ENCODE measurements at regions of chr1 and their contacts with region 1.

Region 1: DNA sequence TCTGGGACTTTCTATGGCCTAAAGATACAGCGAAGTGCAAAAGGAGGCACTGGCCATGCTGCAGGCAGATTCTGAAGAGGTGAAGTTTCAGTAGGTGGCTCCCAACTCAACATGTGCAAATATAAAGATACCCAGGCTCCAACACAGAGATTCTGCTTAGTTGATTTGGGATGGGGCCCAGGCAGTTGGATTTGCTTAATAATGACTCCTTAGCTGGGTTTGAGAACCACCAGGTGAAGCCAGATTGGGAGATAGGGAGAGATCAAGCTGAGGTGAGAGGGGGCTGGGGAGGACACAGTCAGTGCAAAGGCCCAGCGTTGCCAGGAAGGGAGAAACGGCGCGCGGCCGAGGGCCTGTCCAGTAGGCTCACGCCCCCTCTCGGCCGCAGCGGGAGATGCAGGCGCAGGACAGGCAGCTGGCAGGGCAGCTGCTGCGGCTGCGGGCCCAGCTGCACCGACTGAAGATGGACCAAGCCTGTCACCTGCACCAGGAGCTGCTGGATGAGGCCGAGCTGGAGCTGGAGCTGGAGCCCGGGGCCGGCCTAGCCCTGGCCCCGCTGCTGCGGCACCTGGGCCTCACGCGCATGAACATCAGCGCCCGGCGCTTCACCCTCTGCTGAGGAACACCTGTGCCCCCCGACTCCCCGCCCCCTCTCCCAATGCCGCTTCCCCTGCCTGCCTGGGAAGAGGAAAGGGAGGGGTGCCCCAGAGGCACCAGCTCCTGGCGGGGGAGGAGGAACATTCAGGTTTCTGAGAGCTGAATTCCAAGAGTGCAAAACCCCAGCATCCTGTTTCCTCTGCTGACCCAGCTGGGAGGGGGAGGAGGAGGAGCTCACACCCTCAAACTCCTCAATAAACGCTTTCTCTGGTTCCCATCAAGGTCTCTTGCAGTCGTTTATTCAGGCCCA is 1.2 kb downstream of the FAM167B start:
- DNase-seq: peak; percentile 63 to 75 (median 68)
- H3K4me3 ChIP-seq: peak overlapping the region; percentile 42
- H3K4me3 Mint-ChIP-seq: peak overlapping the region; percentile 82 to 100 (median 94)
- H3K27ac ChIP-seq: peak overlapping the region; percentile 89
- H3K27ac Mint-ChIP-seq: peak overlapping the region; percentile 91 to 99 (median 99)
- H3K4me1 ChIP-seq: peaks cover 52% of the 10 kb centered on the region
- H3K4me1 Mint-ChIP-seq: peaks cover 26 to 64% (median 37%) of the 10 kb centered on the region in 4 donors
- H3K27me3 ChIP-seq: no peaks in the 10 kb centered on the region
- H3K27me3 Mint-ChIP-seq: no peaks in the 10 kb centered on the region

Region 2: GRCh38 chr1:31715087-31715872 is 533.0 kb before region 1 on chr1:
- CTCF ChIA-PET with region 1: no interaction called
- POLR2A ChIA-PET with region 1: no interaction called
- intact Hi-C with region 1: no loop called
- DNase-seq: peak in 1 of 5 donors; percentile 15
- H3K4me3 ChIP-seq: no peak overlapping the region
- H3K4me3 Mint-ChIP-seq: peak overlapping the region; percentile 44 to 83 (median 70)
- H3K27ac ChIP-seq: no peak overlapping the region
- H3K27ac Mint-ChIP-seq: no peak overlapping the region
- H3K4me1 ChIP-seq: peaks cover 18% of the 10 kb centered on the region
- H3K4me1 Mint-ChIP-seq: peaks cover 7 to 23% (median 15%) of the 10 kb centered on the region in 4 donors
- H3K27me3 ChIP-seq: no peaks in the 10 kb centered on the region
- H3K27me3 Mint-ChIP-seq: peaks cover 33 to 51% of the 10 kb centered on the region in 2 donors

Region 3: GRCh38 chr1:32020339-32020738 is 227.9 kb before region 1 on chr1:
- CTCF ChIA-PET with region 1: no interaction called
- POLR2A ChIA-PET with region 1: no interaction called
- intact Hi-C with region 1: no loop called
- DNase-seq: no peak
- H3K4me3 ChIP-seq: no peak overlapping the region
- H3K4me3 Mint-ChIP-seq: peak overlapping the region in 7 of 8 donors; percentile 1 to 72 (median 60)
- H3K27ac ChIP-seq: no peak overlapping the region
- H3K27ac Mint-ChIP-seq: peak overlapping the region; percentile 14 to 84 (median 53)
- H3K4me1 ChIP-seq: peaks cover 87% of the 10 kb centered on the region
- H3K4me1 Mint-ChIP-seq: peaks cover 33 to 78% (median 47%) of the 10 kb centered on the region in 4 donors
- H3K27me3 ChIP-seq: no peaks in the 10 kb centered on the region
- H3K27me3 Mint-ChIP-seq: no peaks in the 10 kb centered on the region

Region 4: GRCh38 chr1:32179443-32180185 is 68.6 kb before region 1 on chr1 and contains the start of gene TXLNA:
- CTCF ChIA-PET with region 1: interaction called, 6 read pairs
- POLR2A ChIA-PET with region 1: interaction called, 20 read pairs
- intact Hi-C with region 1: no loop called
- DNase-seq: peak; percentile 87 to 91 (median 88)
- H3K4me3 ChIP-seq: peak within 1 kb of the TSS; percentile 19 to 72
- H3K4me3 Mint-ChIP-seq: peak within 1 kb of the TSS; percentile 89 to 93 (median 92)
- H3K27ac ChIP-seq: peak within 1 kb of the TSS; percentile 83
- H3K27ac Mint-ChIP-seq: peak within 1 kb of the TSS; percentile 90 to 98 (median 96)
- H3K4me1 ChIP-seq: peaks cover 31% of the 10 kb centered on the region
- H3K4me1 Mint-ChIP-seq: peaks cover 24 to 53% (median 39%) of the 10 kb centered on the region in 4 donors
- H3K27me3 ChIP-seq: no peaks in the 10 kb centered on the region
- H3K27me3 Mint-ChIP-seq: no peaks in the 10 kb centered on the region
- total RNA-seq, gene TXLNA: 42.6 to 43.4 TPM

Region 5: DNA sequence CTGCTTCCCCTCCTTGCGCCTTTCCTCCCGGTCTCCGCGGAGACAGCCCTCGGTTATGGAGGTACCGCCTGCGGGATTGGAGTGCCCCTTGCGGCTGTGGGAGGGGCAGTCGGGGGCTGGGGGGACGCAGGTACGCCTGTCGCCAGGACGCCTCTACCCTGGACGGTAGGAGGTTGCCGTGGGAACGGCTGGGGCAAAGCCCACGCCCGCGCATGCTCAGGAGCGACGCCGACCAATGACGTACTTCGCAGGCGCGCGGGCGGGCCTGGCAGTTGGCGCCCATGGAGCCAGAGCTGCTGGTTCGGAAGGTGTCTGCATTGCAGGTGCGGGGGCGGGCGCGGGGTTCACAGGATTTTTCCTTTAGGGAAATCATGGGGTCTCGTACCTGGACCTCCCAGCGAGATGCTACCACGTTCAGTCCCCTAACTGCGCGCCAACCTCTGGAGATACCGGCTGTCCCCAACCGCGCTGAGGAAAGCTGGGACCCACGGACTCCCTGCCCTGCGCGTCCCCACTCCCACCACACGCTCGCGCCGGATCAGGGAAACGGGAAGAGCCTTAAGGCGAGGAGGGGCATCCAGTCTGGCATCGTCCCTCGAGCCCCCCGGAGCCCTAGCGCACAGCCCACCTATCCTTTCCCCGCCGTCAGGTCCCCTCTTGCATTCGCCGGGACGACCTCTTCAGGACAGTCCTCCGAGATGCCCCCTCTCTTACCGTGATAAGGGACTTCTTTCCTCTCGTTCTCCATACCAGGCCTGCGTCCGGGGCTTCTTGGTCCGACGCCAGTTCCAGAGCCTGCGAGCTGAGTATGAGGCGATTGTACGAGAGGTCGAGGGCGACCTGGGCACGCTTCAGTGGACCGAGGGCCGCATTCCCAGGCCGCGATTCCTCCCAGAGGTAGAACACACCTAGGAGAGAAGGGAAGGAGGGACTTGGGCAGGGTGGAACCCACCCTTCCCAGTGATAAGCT is 42.5 kb before region 1 on chr1 and contains the start of gene IQCC:
- CTCF ChIA-PET with region 1: interaction called, 15 read pairs
- POLR2A ChIA-PET with region 1: interaction called, 20 read pairs
- intact Hi-C with region 1: no loop called
- DNase-seq: peak; percentile 84 to 86 (median 86)
- H3K4me3 ChIP-seq: peak within 1 kb of the TSS; percentile 71 to 73
- H3K4me3 Mint-ChIP-seq: peak within 1 kb of the TSS; percentile 86 to 91 (median 89)
- H3K27ac ChIP-seq: peak within 1 kb of the TSS; percentile 63
- H3K27ac Mint-ChIP-seq: peak within 1 kb of the TSS; percentile 83 to 95 (median 92)
- H3K4me1 ChIP-seq: peaks cover 39% of the 10 kb centered on the region
- H3K4me1 Mint-ChIP-seq: peaks cover 15 to 48% (median 33%) of the 10 kb centered on the region in 4 donors
- H3K27me3 ChIP-seq: no peaks in the 10 kb centered on the region
- H3K27me3 Mint-ChIP-seq: no peaks in the 10 kb centered on the region
- total RNA-seq, gene IQCC: 2.7 TPM

Region 6: DNA sequence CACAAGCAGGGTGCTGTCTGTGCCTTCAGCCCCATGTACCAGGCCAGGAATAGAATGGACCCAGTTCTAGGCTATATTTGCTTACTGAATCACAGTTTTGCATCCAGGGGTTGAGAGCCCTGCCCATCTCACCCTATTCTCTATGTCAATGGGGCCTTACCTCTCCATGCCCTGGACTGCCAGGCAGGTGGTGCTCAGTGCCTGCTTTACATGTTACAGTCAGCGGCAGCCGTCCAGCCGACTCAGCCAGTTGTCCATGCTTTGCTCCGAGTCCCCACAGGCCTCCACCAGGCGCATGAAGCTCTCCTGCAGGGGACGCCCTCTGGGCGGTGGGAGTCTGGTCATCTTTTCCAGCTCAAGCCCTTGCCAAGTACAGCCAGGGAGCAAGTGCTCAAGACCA is 13.4 kb before region 1 on chr1:
- CTCF ChIA-PET with region 1: interaction called, 151 read pairs
- POLR2A ChIA-PET with region 1: interaction called, 819 read pairs
- intact Hi-C with region 1: no loop called
- DNase-seq: no peak
- H3K4me3 ChIP-seq: no peak overlapping the region
- H3K4me3 Mint-ChIP-seq: no peak overlapping the region
- H3K27ac ChIP-seq: no peak overlapping the region
- H3K27ac Mint-ChIP-seq: no peak overlapping the region
- H3K4me1 ChIP-seq: peaks cover 1% of the 10 kb centered on the region
- H3K4me1 Mint-ChIP-seq: peaks cover 0 to 6% (median 3%) of the 10 kb centered on the region in 4 donors
- H3K27me3 ChIP-seq: no peaks in the 10 kb centered on the region
- H3K27me3 Mint-ChIP-seq: no peaks in the 10 kb centered on the region

Region 7: GRCh38 chr1:32273388-32274208 is 25.4 kb after region 1 on chr1:
- CTCF ChIA-PET with region 1: interaction called, 55 read pairs
- POLR2A ChIA-PET with region 1: interaction called, 819 read pairs
- intact Hi-C with region 1: loop called (anchors 1 kb)
- DNase-seq: peak; percentile 80 to 98 (median 82)
- H3K4me3 ChIP-seq: peak overlapping the region; percentile 5 to 36
- H3K4me3 Mint-ChIP-seq: peak overlapping the region; percentile 80 to 89 (median 82)
- H3K27ac ChIP-seq: peak overlapping the region; percentile 62
- H3K27ac Mint-ChIP-seq: peak overlapping the region; percentile 95 to 100 (median 97)
- H3K4me1 ChIP-seq: peaks cover 61% of the 10 kb centered on the region
- H3K4me1 Mint-ChIP-seq: peaks cover 44 to 63% (median 51%) of the 10 kb centered on the region in 4 donors
- H3K27me3 ChIP-seq: no peaks in the 10 kb centered on the region
- H3K27me3 Mint-ChIP-seq: no peaks in the 10 kb centered on the region

Region 8: DNA sequence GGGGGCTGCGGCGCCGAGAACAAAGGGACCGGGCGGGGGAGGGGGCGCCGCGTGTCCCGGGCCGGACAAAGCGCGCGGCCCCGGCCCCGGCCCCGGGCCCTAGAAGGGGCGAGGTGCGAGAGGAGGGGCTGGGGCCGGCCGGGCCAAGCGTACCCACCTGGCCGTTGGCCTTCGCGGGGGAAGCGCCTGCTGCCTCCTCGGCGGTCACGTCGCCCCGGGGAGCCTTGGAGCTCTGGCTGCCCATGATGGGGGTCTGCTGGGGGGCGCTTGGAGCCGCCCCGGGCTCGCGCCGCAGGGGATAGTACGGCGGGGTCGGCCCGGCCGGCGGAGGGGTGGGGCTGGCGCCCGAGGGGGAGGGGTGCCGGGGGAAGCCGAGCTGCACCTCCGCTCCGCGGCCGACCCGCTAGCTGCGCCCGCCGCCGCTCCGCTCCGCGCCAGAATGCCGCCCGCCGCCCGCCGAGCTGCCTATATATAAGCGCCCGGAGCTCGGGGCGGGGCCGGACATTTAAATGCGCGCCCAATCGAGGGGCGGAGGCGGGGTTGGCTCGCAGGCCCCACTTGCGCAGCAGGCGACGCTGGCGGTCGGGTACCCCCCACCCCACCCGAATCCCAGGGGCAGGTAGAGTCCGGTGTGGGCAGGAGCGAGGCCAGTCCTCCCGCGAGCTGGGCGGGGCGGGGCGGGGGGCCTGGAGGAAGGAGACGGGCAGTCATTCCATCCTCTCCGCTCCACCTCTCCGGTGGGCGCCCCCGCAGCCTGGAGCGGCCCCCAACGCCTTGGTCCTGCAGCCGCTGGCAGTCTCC is 87.8 kb after region 1 on chr1 and contains the start of gene MARCKSL1:
- CTCF ChIA-PET with region 1: interaction called, 7 read pairs
- POLR2A ChIA-PET with region 1: interaction called, 133 read pairs
- intact Hi-C with region 1: loop called (anchors 1 kb)
- DNase-seq: peak; percentile 82 to 85 (median 85)
- H3K4me3 ChIP-seq: peak within 1 kb of the TSS; percentile 29 to 48
- H3K4me3 Mint-ChIP-seq: peak within 1 kb of the TSS; percentile 83 to 92 (median 87)
- H3K27ac ChIP-seq: peak within 1 kb of the TSS; percentile 45
- H3K27ac Mint-ChIP-seq: peak within 1 kb of the TSS; percentile 31 to 95 (median 85)
- H3K4me1 ChIP-seq: peaks cover 40% of the 10 kb centered on the region
- H3K4me1 Mint-ChIP-seq: peaks cover 26 to 44% (median 34%) of the 10 kb centered on the region in 4 donors
- H3K27me3 ChIP-seq: no peaks in the 10 kb centered on the region
- H3K27me3 Mint-ChIP-seq: no peaks in the 10 kb centered on the region
- total RNA-seq, gene MARCKSL1: 46.5 to 47.3 TPM

Region 9: GRCh38 chr1:32394141-32394889 is 146.1 kb after region 1 on chr1 and contains the start of gene BSDC1:
- CTCF ChIA-PET with region 1: interaction called, 5 read pairs
- POLR2A ChIA-PET with region 1: interaction called, 29 read pairs
- intact Hi-C with region 1: no loop called
- DNase-seq: peak; percentile 98 to 99 (median 99)
- H3K4me3 ChIP-seq: peak within 1 kb of the TSS; percentile 87
- H3K4me3 Mint-ChIP-seq: peak within 1 kb of the TSS; percentile 99 to 100 (median 100)
- H3K27ac ChIP-seq: peak within 1 kb of the TSS; percentile 95
- H3K27ac Mint-ChIP-seq: peak within 1 kb of the TSS; percentile 92 to 100 (median 100)
- H3K4me1 ChIP-seq: peaks cover 43% of the 10 kb centered on the region
- H3K4me1 Mint-ChIP-seq: peaks cover 5 to 25% (median 19%) of the 10 kb centered on the region in 4 donors
- H3K27me3 ChIP-seq: no peaks in the 10 kb centered on the region
- H3K27me3 Mint-ChIP-seq: peaks cover 0 to 1% of the 10 kb centered on the region in 2 donors
- total RNA-seq, gene BSDC1: 106 to 112 TPM

Measured in CD4-positive, alpha-beta memory T cell (primary cell).